GM10248 (cell line): ENCODE measurements at regions of chr1 and their contacts with region 1.

Region 1: DNA sequence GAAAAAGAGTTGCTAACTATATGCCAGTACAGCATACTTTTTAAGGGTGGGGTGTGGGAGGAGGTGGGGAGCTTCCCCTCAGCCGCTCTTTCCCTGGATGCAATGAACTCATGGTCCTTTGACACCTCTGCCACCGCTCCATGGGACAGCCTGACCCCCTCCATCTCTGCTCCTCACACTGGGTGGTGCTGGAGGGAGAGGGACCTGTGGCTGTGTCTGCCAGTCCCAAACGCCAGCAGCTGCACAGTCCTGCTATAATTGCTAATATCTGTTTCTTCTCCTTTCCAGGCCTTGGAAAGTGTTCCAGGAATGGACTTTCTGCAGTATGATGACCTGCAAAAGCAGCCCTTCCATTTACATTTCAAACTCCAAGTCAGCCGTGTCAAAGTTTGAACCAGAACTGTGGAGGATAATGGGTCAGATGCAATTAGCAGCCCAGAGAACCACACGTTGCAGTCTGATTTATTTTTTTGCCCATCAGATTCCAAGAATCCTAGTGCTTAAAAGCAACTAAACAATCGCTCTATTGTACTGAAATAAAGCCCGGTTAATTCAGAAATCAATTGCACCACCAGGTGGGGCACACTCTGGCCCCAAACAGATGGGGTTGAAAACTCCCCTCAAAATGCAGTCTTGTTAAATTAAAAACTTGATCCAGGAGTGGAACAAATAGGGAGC is 160.7 kb upstream of the LMO4 start:
- DNase-seq: no peak
- CTCF ChIP-seq: no peak

Region 2: DNA sequence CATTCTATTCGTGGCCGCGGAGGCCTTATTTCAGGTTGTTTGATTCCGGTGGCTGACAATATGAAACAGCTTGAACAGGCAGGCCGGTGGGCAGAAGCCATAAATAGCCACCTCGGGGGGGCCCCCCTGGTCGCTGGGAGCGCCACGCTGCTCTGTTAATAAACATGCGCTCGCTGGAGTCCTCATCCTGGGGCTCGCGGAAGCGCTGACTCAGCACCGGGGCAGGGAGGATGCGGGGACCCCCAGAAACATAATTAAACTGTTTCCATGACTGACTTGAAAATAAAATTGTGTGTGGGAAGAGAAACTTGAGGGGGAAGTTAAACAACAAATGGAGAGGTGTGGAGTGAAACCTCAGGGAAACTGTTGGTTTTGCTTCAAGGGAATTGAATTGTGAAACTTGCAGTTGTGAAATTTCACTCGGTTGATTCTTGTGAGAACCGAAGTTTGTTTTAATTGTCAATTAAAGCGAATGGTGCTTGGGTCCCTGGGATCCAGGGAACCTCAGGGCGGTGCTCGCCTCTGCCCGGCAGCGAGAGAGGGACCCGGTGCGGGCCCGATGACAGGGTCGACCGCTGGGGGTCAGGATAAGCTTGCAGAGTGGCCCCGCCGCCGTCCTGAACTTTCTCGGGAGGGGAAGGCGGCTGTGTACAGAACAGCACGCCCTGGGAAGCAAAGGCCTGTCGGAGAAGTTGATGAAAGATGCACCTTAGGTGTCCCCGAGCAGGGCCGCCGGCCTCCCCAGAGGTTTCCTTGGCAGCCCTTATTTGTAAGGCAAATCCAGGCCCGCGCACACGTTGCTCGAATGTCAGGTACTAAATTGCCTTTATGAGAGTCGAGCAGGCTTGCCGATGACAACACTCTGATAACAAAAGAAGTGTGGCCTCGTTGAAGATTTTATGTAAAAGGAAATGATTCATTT is 16.2 kb before region 1 on chr1:
- CTCF ChIA-PET with region 1: interaction called, 17 read pairs
- POLR2A ChIA-PET with region 1: no interaction called
- DNase-seq: peak; percentile 70
- CTCF ChIP-seq: peak; percentile 76